ENCODE measurements at regions of chr15 and their contacts with region 1.

Region 1: GRCh38 chr15:38362355-38362754 is 91.6 kb upstream of the FAM98B start:
- DNase-seq: no peak
- ATAC-seq: no peak
- H3K4me3 ChIP-seq: no peak overlapping the region
- H3K27ac ChIP-seq: no peak overlapping the region
- H3K4me1 ChIP-seq: no peaks in the 10 kb centered on the region; a peak in 1 of 5 replicates
- H3K27me3 ChIP-seq: peaks cover 5 to 12% of the 10 kb centered on the region in 2 experiments; a peak in 4 of 5 replicates
- CTCF ChIP-seq: no peak
- EP300 ChIP-seq: no peak
- POLR2A ChIP-seq: no peak
- RAD21 ChIP-seq: no peak

Region 2: GRCh38 chr15:37880009-37880834 is 482.1 kb before region 1 on chr15:
- CTCF ChIA-PET with region 1: no interaction called
- POLR2A ChIA-PET with region 1: no interaction called
- in situ Hi-C with region 1: no loop called
- intact Hi-C with region 1: loop called (anchors 5 kb)
- DNase-seq: peak; percentile 14 to 30 (median 22)
- ATAC-seq: peak; percentile 70
- H3K4me3 ChIP-seq: no peak overlapping the region
- H3K27ac ChIP-seq: no peak overlapping the region
- H3K4me1 ChIP-seq: no peaks in the 10 kb centered on the region
- H3K27me3 ChIP-seq: no peaks in the 10 kb centered on the region
- CTCF ChIP-seq: peak; percentile 52 to 58 (median 56)
- EP300 ChIP-seq: no peak
- POLR2A ChIP-seq: no peak
- RAD21 ChIP-seq: peak; percentile 58 to 65

Region 3: GRCh38 chr15:38103564-38103963 is 258.8 kb before region 1 on chr15:
- CTCF ChIA-PET with region 1: no interaction called
- POLR2A ChIA-PET with region 1: no interaction called
- in situ Hi-C with region 1: no loop called
- intact Hi-C with region 1: no loop called
- DNase-seq: no peak
- ATAC-seq: no peak
- H3K4me3 ChIP-seq: no peak overlapping the region
- H3K27ac ChIP-seq: no peak overlapping the region
- H3K4me1 ChIP-seq: no peaks in the 10 kb centered on the region
- H3K27me3 ChIP-seq: no peaks in the 10 kb centered on the region; a peak in 1 of 5 replicates
- CTCF ChIP-seq: no peak
- EP300 ChIP-seq: no peak
- POLR2A ChIP-seq: no peak
- RAD21 ChIP-seq: no peak